Activated CD4-positive, alpha-beta T cell treated with anti-CD3 and anti-CD28 coated beads for 36 hours (primary cell): ENCODE measurements at regions of chr2 and their contacts with region 1.

Region 1: GRCh38 chr2:118846667-118847496 is 566 bp downstream of the EN1 start:
- DNase-seq: no peak
- ATAC-seq: no peak
- H3K4me3 Mint-ChIP-seq: peak overlapping the region; percentile 55
- H3K27ac Mint-ChIP-seq: no peak overlapping the region
- H3K4me1 Mint-ChIP-seq: peaks cover 31% of the 10 kb centered on the region
- H3K27me3 Mint-ChIP-seq: peaks cover 74% of the 10 kb centered on the region

Region 2: GRCh38 chr2:117273009-117273671 is 1573.7 kb before region 1 on chr2:
- CTCF ChIA-PET with region 1: no interaction called
- POLR2A ChIA-PET with region 1: no interaction called
- intact Hi-C with region 1: no loop called
- DNase-seq: no peak
- ATAC-seq: no peak
- H3K4me3 Mint-ChIP-seq: no peak overlapping the region
- H3K27ac Mint-ChIP-seq: no peak overlapping the region
- H3K4me1 Mint-ChIP-seq: no peaks in the 10 kb centered on the region
- H3K27me3 Mint-ChIP-seq: no peaks in the 10 kb centered on the region

Region 3: DNA sequence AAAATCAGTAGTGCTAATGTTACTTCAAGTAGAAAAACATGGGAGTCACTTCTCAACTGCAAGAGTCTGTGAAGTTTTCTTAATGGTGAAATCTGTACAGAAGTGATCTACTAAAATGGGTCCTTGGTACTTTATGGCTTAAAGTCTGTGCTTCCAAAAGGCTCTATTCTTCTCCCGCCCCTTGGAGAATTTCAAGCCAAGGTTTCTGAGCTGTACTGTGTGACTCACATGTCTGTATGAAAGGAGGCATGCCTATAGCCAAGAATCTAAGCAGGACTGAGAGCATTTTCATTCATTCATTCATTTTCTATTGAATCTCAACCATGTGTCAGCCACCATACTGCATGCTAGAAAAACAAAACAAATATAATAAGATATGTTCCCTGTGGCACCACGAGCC is 1052.2 kb before region 1 on chr2:
- CTCF ChIA-PET with region 1: no interaction called
- POLR2A ChIA-PET with region 1: no interaction called
- intact Hi-C with region 1: no loop called
- DNase-seq: no peak
- ATAC-seq: no peak
- H3K4me3 Mint-ChIP-seq: no peak overlapping the region
- H3K27ac Mint-ChIP-seq: no peak overlapping the region
- H3K4me1 Mint-ChIP-seq: no peaks in the 10 kb centered on the region
- H3K27me3 Mint-ChIP-seq: peaks cover 19% of the 10 kb centered on the region

Region 4: GRCh38 chr2:118686369-118686768 is 160.5 kb before region 1 on chr2:
- CTCF ChIA-PET with region 1: no interaction called
- POLR2A ChIA-PET with region 1: no interaction called
- intact Hi-C with region 1: no loop called
- DNase-seq: no peak
- ATAC-seq: no peak
- H3K4me3 Mint-ChIP-seq: no peak overlapping the region
- H3K27ac Mint-ChIP-seq: no peak overlapping the region
- H3K4me1 Mint-ChIP-seq: no peaks in the 10 kb centered on the region
- H3K27me3 Mint-ChIP-seq: peaks cover 12% of the 10 kb centered on the region

Region 5: GRCh38 chr2:118834901-118835745 is 11.8 kb before region 1 on chr2:
- CTCF ChIA-PET with region 1: interaction called, 3 read pairs
- POLR2A ChIA-PET with region 1: no interaction called
- intact Hi-C with region 1: loop called (anchors 2 kb)
- DNase-seq: no peak
- ATAC-seq: no peak
- H3K4me3 Mint-ChIP-seq: no peak overlapping the region
- H3K27ac Mint-ChIP-seq: no peak overlapping the region
- H3K4me1 Mint-ChIP-seq: peaks cover 9% of the 10 kb centered on the region
- H3K27me3 Mint-ChIP-seq: peaks cover 83% of the 10 kb centered on the region

Region 6: DNA sequence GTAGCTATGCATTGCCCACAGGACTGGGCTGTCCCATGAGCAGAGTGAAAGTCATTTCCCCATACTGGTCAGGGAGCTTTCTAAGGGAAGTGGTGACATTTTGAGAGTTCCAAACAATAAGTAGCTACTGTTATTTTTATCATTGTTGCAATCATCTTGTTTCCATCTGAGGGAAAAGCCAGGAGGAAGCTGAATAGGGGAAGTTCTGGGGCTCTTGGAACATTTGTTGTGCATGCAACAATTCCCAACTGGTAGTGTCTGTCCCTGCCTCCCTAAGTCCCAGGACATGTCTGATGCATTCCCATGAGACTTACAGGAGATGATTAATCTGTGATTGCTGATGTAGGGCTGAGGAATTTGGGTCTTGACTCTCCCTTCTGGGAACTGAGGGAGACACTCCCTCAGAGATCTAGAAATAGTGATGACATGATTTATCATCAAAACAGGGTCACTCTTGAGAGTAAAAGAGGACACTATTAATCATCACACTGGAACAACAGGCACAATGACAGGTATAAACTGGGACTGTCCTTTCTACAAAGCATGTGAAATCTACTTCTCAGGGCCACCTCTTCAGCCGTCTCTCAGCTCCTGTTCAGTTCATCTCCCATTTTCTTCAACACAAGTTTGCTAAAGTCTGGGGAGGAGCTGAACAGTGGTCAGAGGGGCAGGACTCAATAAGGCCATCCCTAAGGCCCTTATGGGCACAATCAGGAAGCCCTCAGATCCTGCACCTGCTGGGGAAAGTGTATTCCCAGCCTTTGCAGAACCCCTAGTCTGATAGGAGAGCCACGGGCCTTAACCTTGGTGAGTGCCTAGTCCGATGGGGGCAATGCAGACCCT is 67.1 kb after region 1 on chr2:
- CTCF ChIA-PET with region 1: no interaction called
- POLR2A ChIA-PET with region 1: no interaction called
- intact Hi-C with region 1: no loop called
- DNase-seq: no peak
- ATAC-seq: no peak
- H3K4me3 Mint-ChIP-seq: no peak overlapping the region
- H3K27ac Mint-ChIP-seq: no peak overlapping the region
- H3K4me1 Mint-ChIP-seq: no peaks in the 10 kb centered on the region
- H3K27me3 Mint-ChIP-seq: peaks cover 3% of the 10 kb centered on the region